Thyroid gland (tissue), 4 donors: ENCODE measurements at regions of chr9 and their contacts with region 1.

Region 1: DNA sequence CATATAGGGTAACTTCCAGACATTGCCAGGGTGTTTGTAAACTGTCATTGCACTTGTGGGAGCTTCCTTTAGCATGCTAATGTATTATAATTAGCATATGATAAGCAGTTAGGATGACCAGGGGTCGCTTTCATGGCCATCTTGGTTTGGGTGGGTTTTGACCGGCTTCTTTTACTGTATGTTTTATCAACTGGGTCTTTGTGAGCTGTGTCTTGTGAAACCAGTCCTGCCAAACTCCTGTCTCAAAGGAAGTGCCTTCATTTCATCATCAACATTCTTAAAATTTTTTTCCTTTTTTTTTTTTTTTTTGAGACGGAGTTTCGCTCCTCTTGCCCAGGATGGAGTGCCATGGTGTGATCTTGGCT is 11.9 kb upstream of the MELK start:
- DNase-seq: no peak
- H3K4me3 ChIP-seq: no peak overlapping the region
- H3K27ac ChIP-seq: no peak overlapping the region
- H3K4me1 ChIP-seq: no peaks in the 10 kb centered on the region
- H3K27me3 ChIP-seq: no peaks in the 10 kb centered on the region
- CTCF ChIP-seq: no peak
- POLR2A ChIP-seq: no peak

Region 2: GRCh38 chr9:36407122-36407723 is 153.6 kb before region 1 on chr9:
- intact Hi-C with region 1: loop called (anchors 5 kb)
- DNase-seq: peak; percentile 57 to 60
- H3K4me3 ChIP-seq: no peak overlapping the region
- H3K27ac ChIP-seq: peak overlapping the region; percentile 11 to 46 (median 18)
- H3K4me1 ChIP-seq: peaks cover 23 to 27% of the 10 kb centered on the region in 2 donors
- H3K27me3 ChIP-seq: no peaks in the 10 kb centered on the region
- CTCF ChIP-seq: peak; percentile 86 to 97 (median 92)
- POLR2A ChIP-seq: no peak

Region 3: DNA sequence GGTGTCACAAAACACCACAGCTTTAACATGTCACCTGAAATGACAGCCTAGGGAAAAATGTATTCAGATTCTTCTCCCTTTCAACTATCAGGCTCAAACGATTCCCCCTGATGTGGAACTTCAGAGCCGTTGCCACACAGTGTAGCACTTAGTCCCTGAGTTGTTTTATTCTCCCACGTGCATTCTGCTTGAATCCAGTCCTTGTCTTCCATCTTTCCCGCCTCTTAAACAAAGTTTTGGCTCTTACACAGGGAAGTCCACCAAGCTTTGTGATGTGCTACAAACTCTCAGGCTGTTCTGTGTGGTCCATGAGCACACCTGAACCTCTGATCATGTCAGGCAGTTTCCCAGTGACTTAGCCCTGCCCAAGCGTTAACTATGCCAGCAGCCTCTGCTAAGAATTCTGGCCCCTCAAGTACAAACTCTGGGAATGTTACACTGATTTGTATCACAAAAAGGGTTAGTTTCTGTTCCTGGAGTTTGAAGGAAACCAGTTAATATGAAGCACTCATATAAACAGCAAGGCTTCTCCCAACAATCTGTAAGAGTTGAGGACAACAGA is 115.0 kb before region 1 on chr9:
- intact Hi-C with region 1: loop called (anchors 5 kb)
- DNase-seq: peak; percentile 27
- H3K4me3 ChIP-seq: no peak overlapping the region
- H3K27ac ChIP-seq: peak overlapping the region in 2 of 3 donors; percentile 6 to 51
- H3K4me1 ChIP-seq: peaks cover 17 to 22% of the 10 kb centered on the region in 2 donors
- H3K27me3 ChIP-seq: no peaks in the 10 kb centered on the region
- CTCF ChIP-seq: no peak
- POLR2A ChIP-seq: no peak

Region 4: GRCh38 chr9:36640771-36641381 is 80.0 kb after region 1 on chr9:
- intact Hi-C with region 1: no loop called
- DNase-seq: no peak
- H3K4me3 ChIP-seq: no peak overlapping the region
- H3K27ac ChIP-seq: no peak overlapping the region
- H3K4me1 ChIP-seq: no peaks in the 10 kb centered on the region
- H3K27me3 ChIP-seq: no peaks in the 10 kb centered on the region
- CTCF ChIP-seq: no peak
- POLR2A ChIP-seq: no peak

Region 5: GRCh38 chr9:36698984-36699383 is 138.1 kb after region 1 on chr9:
- intact Hi-C with region 1: no loop called
- DNase-seq: no peak
- H3K4me3 ChIP-seq: no peak overlapping the region
- H3K27ac ChIP-seq: no peak overlapping the region
- H3K4me1 ChIP-seq: no peaks in the 10 kb centered on the region
- H3K27me3 ChIP-seq: no peaks in the 10 kb centered on the region
- CTCF ChIP-seq: no peak
- POLR2A ChIP-seq: no peak